Activated CD8-positive, alpha-beta T cell treated with anti-CD3 and anti-CD28 coated beads, Interleukin-2, amount 10 ng/mL, durations not matched to agents 7 days and 5 days (primary cell): ENCODE measurements at regions of chr5 and their contacts with region 1.

Region 1: DNA sequence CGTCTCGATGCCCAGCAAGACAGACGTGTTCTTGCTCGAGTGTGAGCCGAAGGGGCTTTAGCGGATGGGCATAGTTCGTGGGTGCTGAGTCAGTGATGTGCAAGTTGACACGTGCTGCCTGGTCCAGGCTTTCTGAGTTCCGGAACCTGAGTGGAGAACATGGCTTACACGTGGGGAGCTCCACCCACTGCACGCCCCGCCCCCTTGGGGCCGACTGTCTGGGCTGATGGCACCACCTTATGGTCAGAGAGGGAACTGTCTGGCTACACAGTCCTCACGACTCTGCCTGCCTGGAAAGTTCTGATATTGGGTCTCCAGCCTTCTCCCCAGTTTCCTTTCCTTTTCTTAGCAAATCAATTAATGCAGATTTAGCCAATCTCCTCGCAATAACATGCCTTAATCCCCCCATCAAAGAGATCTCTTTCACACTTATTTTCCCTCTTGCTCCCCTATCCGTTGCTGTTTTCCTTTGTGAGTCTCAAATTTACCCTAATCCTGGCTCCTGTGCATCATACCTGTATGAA is 3.8 kb upstream of the STC2 start:
- DNase-seq: peak; percentile 93
- ATAC-seq: peak; percentile 69
- H3K4me3 Mint-ChIP-seq: no peak overlapping the region
- H3K27ac Mint-ChIP-seq: peak overlapping the region; percentile 44
- H3K4me1 Mint-ChIP-seq: peaks cover 37% of the 10 kb centered on the region
- H3K27me3 Mint-ChIP-seq: peaks cover 14% of the 10 kb centered on the region

Region 2: GRCh38 chr5:173293817-173294672 is 38.0 kb before region 1 on chr5:
- CTCF ChIA-PET with region 1: interaction called, 155 read pairs
- POLR2A ChIA-PET with region 1: interaction called, 6 read pairs
- DNase-seq: peak; percentile 77
- ATAC-seq: peak; percentile 88
- H3K4me3 Mint-ChIP-seq: peak overlapping the region; percentile 31
- H3K27ac Mint-ChIP-seq: no peak overlapping the region
- H3K4me1 Mint-ChIP-seq: peaks cover 13% of the 10 kb centered on the region
- H3K27me3 Mint-ChIP-seq: peaks cover 38% of the 10 kb centered on the region

Region 3: GRCh38 chr5:173315495-173316350 is 16.3 kb before region 1 on chr5:
- CTCF ChIA-PET with region 1: interaction called, 14 read pairs
- POLR2A ChIA-PET with region 1: interaction called, 3 read pairs
- DNase-seq: no peak
- ATAC-seq: no peak
- H3K4me3 Mint-ChIP-seq: no peak overlapping the region
- H3K27ac Mint-ChIP-seq: no peak overlapping the region
- H3K4me1 Mint-ChIP-seq: no peaks in the 10 kb centered on the region
- H3K27me3 Mint-ChIP-seq: peaks cover 5% of the 10 kb centered on the region